ENCODE measurements at regions of chr1 and their contacts with region 1.

Region 1: DNA sequence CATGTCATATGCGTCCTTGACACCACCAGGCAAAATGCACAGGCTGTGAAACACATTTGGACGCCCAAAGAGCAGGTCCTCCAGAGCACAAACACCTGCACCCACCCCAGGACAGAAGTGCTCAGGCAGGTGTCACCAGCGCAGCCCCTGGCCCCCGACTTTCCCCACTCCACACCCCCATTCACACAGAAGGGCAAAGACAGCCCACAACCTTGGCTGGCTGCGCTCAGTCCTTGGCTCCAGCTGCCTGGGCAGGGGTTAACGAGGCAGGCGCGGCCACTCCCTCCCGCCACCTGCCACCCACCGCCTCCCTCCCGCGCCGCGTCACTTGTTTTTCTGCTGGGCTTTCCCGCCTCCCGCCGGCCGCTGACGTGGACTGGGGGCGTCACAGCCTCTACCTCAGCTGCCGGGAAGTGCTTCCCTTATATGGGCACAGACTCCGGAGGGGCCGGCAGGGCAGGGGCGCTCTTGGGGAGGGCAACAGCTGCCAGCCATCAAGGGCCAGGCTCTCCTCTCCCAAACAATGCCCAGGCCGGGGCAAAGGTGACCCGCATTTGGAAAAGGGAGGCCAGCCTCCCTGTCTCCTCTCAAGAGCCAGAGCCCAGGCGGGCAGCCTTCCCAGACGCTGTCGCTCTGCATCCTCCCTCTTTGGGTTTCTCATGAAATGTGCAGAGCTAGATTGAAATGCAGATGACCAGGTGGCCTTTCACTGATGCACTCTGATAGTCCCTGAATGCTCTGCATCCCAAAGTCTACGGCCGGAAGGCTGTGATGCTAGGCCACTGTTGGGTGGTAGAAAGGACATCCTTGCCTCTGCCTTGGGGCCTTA is 14.8 kb upstream of the BTG2 start:
- DNase-seq: peak; percentile 98
- H3K4me3 Mint-ChIP-seq: peak overlapping the region; percentile 76
- H3K27ac Mint-ChIP-seq: peak overlapping the region; percentile 100
- H3K4me1 Mint-ChIP-seq: peaks cover 73% of the 10 kb centered on the region
- H3K27me3 Mint-ChIP-seq: no peaks in the 10 kb centered on the region

Region 2: GRCh38 chr1:203320591-203321272 is 30.3 kb after region 1 on chr1:
- CTCF ChIA-PET with region 1: interaction called, 7 read pairs
- POLR2A ChIA-PET with region 1: interaction called, 383 read pairs
- DNase-seq: peak; percentile 83
- H3K4me3 Mint-ChIP-seq: peak overlapping the region; percentile 38
- H3K27ac Mint-ChIP-seq: peak overlapping the region; percentile 83
- H3K4me1 Mint-ChIP-seq: peaks cover 70% of the 10 kb centered on the region
- H3K27me3 Mint-ChIP-seq: peaks cover 3% of the 10 kb centered on the region

Region 3: GRCh38 chr1:203326830-203327683 is 36.6 kb after region 1 on chr1:
- CTCF ChIA-PET with region 1: interaction called, 12 read pairs
- POLR2A ChIA-PET with region 1: interaction called, 383 read pairs
- DNase-seq: peak; percentile 95
- H3K4me3 Mint-ChIP-seq: peak overlapping the region; percentile 75
- H3K27ac Mint-ChIP-seq: peak overlapping the region; percentile 95
- H3K4me1 Mint-ChIP-seq: peaks cover 65% of the 10 kb centered on the region
- H3K27me3 Mint-ChIP-seq: no peaks in the 10 kb centered on the region

Region 4: GRCh38 chr1:203368624-203369451 is 78.4 kb after region 1 on chr1:
- CTCF ChIA-PET with region 1: no interaction called
- POLR2A ChIA-PET with region 1: no interaction called
- DNase-seq: no peak
- H3K4me3 Mint-ChIP-seq: no peak overlapping the region
- H3K27ac Mint-ChIP-seq: no peak overlapping the region
- H3K4me1 Mint-ChIP-seq: no peaks in the 10 kb centered on the region
- H3K27me3 Mint-ChIP-seq: peaks cover 17% of the 10 kb centered on the region